ENCODE measurements at regions of chr9 and their contacts with region 1.

Region 1: DNA sequence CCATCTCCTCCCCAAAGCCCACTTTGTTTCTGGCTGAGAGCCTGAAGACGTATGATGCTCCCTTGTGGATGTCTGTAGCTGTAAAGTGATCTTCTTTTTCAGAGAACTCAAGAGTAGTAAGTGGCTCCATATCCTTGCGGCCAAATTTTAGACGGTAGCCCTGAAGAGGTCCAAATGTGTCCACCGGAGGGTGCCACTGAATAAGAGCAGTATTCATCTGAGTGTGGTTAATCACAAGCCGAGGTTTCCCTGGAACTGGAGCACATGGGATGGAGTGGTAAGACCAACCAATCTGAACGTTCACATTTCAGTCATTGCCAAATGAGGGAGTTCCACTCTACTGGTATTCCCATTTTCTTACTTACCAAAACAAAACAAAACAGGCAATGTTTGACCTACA is 686.5 kb upstream of the DMAC1 start:
- DNase-seq: peak in 1 of 2 donors; percentile 25
- ATAC-seq: peak; percentile 67 to 81 (median 78)
- H3K4me3 ChIP-seq: no peak overlapping the region
- H3K27ac ChIP-seq: no peak overlapping the region
- H3K4me1 ChIP-seq: no peaks in the 10 kb centered on the region
- H3K27me3 ChIP-seq: no peaks in the 10 kb centered on the region
- CTCF ChIP-seq: peak; percentile 5 to 58 (median 48)

Region 2: GRCh38 chr9:8429768-8430167 is 56.3 kb before region 1 on chr9:
- intact Hi-C with region 1: no loop called
- DNase-seq: no peak
- ATAC-seq: no peak
- H3K4me3 ChIP-seq: no peak overlapping the region
- H3K27ac ChIP-seq: no peak overlapping the region
- H3K4me1 ChIP-seq: no peaks in the 10 kb centered on the region
- H3K27me3 ChIP-seq: no peaks in the 10 kb centered on the region
- CTCF ChIP-seq: no peak

Region 3: DNA sequence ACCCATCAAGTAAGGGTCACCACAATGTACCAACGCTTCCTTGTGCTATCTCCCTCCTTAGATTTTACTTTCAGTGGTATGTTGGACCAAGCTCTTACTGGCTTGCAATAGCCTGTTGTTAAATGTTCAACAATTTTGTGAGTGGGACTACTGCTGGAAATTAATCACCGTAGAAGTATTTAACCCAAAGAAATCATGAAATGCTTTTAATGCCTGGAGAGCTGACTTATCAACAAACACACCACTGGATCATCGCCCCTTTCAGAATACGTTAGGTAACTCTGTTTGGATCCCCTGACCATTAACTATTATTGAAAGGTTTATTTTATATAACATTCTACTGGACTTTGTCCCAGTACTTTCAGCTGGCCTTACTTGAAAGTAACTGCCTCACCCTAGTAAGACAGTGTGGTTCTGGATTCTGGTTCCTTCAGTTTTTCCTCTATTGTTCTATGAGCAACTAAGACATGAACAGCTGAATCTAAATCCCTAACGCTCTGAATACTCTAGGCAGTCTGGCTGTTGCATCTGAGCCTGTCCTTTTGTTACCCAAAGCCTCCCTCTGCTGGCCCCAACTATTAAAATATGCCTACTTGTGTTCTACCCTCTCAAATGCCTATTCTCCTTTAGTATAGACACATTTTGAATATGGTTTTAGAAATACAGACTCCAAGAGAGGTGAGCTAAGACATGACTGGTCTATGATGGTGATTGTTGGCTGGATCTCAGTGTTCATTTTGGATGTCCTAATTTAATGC is 516.9 kb after region 1 on chr9:
- intact Hi-C with region 1: loop called in 4 of 10 experiments (anchors 2 to 10 kb)
- DNase-seq: peak in 1 of 2 donors; percentile 17
- ATAC-seq: peak in 7 of 8 donors; percentile 67 to 88 (median 77)
- H3K4me3 ChIP-seq: no peak overlapping the region
- H3K27ac ChIP-seq: no peak overlapping the region
- H3K4me1 ChIP-seq: peaks cover 0 to 9% (median 0%) of the 10 kb centered on the region in 9 donors
- H3K27me3 ChIP-seq: no peaks in the 10 kb centered on the region
- CTCF ChIP-seq: peak in 7 of 9 donors; percentile 19 to 56 (median 45)